A673 (cell line): ENCODE measurements at regions of chr12 and their contacts with region 1.

Region 1: DNA sequence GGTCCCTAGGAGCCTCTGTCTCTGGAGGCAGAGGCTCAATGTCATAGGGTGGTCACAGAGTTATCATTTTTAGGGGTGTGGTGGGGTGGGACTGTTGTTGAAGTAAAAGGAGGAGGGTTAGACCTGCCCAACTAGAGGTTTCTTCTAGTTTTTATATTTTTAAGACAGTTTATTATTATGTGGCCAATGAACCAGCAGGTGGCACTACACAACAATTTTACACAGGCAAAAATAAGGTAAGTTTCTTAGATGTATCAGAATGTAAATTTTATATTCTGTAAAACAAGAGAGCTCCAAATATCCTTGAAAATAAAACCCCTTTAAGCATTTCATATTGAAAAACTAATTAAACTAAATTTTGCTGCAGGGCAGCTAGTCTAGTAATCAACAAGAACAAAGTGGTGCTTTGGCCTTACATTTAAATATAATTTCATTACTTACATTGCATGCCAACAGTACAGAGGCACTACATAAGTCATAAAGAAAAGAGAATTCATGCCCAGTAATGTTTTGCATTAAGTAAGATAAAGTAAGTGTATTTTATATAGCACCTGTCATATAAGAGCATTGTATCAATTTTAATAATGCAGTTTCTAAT is 22.2 kb upstream of the OVCH1 start:
- DNase-seq: peak; percentile 66
- H3K4me3 ChIP-seq: no peak overlapping the region
- H3K27ac ChIP-seq: no peak overlapping the region
- H3K4me1 ChIP-seq: no peaks in the 10 kb centered on the region
- H3K27me3 ChIP-seq: no peaks in the 10 kb centered on the region
- CTCF ChIP-seq: peak; percentile 71

Region 2: DNA sequence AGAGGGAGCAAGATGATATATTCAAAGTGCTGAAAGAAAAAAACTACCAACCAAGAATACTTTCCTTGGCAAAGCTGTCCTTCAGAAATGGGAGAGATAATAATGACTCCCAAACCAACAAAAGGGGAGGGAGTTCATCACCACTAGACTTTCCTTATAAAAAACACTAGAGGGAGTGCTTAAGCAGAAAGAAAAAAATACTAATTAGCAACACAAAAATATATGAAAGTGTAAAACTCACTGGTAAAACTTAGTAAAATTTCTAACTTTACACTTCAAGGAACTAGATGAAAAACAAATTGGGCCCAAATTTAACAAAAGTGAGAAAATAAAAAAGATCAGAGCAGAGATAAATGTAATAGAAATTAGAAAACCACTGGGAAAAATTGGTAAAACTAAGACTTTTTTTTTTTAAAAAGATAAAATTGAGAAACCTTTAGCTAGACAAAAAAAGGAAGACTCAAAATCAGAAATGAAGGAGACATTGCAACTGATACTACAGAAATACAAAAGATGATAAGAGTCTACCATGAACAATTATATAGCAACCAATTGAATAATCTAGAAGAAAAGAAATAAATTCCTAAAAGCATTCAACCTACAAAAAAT is 431.0 kb before region 1 on chr12:
- CTCF ChIA-PET with region 1: no interaction called
- POLR2A ChIA-PET with region 1: no interaction called
- intact Hi-C with region 1: loop called (anchors 10 kb)
- DNase-seq: peak; percentile 57
- H3K4me3 ChIP-seq: no peak overlapping the region
- H3K27ac ChIP-seq: no peak overlapping the region
- H3K4me1 ChIP-seq: no peaks in the 10 kb centered on the region
- H3K27me3 ChIP-seq: no peaks in the 10 kb centered on the region
- CTCF ChIP-seq: peak; percentile 71

Region 3: DNA sequence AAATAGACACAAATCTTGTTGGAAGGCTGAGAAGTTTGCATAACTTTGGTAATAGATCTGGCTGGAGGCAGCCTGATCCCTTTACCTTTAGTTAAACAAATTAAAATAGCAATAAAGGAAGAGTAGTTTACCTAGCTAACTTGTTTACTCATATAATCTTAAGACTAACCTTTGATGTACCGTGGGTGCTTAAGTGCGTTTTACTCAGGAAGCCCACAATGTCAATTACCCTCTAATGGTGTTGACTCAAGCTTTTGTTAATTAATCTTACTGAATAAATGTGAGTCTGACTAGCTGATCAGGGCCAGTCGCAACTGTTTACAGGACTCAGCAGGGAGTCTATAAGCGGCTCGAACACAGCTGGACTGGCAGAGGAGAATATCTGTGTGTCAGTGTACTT is 319.1 kb before region 1 on chr12:
- CTCF ChIA-PET with region 1: no interaction called
- POLR2A ChIA-PET with region 1: no interaction called
- intact Hi-C with region 1: no loop called
- DNase-seq: no peak
- H3K4me3 ChIP-seq: no peak overlapping the region
- H3K27ac ChIP-seq: no peak overlapping the region
- H3K4me1 ChIP-seq: no peaks in the 10 kb centered on the region
- H3K27me3 ChIP-seq: no peaks in the 10 kb centered on the region
- CTCF ChIP-seq: no peak

Region 4: GRCh38 chr12:29317556-29318363 is 201.9 kb before region 1 on chr12:
- CTCF ChIA-PET with region 1: no interaction called
- POLR2A ChIA-PET with region 1: no interaction called
- intact Hi-C with region 1: loop called (anchors 10 kb)
- DNase-seq: peak; percentile 84
- H3K4me3 ChIP-seq: no peak overlapping the region
- H3K27ac ChIP-seq: no peak overlapping the region
- H3K4me1 ChIP-seq: peaks cover 6% of the 10 kb centered on the region
- H3K27me3 ChIP-seq: no peaks in the 10 kb centered on the region
- CTCF ChIP-seq: peak; percentile 97

Region 5: DNA sequence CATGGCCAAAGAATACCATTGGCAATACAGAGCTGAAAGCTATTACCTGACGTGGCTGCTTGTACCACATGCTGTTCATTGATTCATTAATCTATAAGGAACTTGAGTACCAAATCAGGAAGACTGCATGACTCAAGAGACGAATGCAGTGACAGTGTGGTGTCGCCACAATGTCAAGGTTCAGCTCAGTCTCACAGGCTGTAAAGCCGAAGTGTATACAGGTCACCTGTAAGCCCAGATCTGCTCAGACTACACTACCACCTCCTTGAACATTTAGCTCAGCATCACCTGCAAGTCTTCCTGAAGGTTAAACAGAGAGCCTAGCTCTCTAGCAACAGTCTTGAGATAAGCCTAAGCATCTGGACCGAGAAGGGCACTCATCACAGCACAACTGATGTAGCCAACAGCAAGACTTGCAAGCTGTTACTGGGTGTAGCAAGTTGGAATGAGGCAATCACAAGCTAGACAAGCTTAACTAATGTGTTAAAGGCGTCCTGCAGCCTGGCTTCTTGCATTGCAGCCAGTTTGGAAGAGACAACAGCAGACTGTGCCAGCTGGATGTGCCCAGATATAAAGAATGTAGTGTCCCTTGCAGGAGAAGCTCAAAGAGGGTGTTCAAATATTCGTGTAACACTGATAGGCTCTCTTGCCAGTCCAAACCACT is 243.1 kb after region 1 on chr12:
- CTCF ChIA-PET with region 1: no interaction called
- POLR2A ChIA-PET with region 1: no interaction called
- intact Hi-C with region 1: no loop called
- DNase-seq: no peak
- H3K4me3 ChIP-seq: no peak overlapping the region
- H3K27ac ChIP-seq: no peak overlapping the region
- H3K4me1 ChIP-seq: no peaks in the 10 kb centered on the region
- H3K27me3 ChIP-seq: no peaks in the 10 kb centered on the region
- CTCF ChIP-seq: no peak

Region 6: GRCh38 chr12:30286345-30286926 is 766.8 kb after region 1 on chr12:
- CTCF ChIA-PET with region 1: no interaction called
- POLR2A ChIA-PET with region 1: no interaction called
- intact Hi-C with region 1: loop called (anchors 5 kb)
- DNase-seq: peak; percentile 59
- H3K4me3 ChIP-seq: no peak overlapping the region
- H3K27ac ChIP-seq: no peak overlapping the region
- H3K4me1 ChIP-seq: no peaks in the 10 kb centered on the region
- H3K27me3 ChIP-seq: peaks cover 8% of the 10 kb centered on the region
- CTCF ChIP-seq: peak; percentile 71

Region 7: DNA sequence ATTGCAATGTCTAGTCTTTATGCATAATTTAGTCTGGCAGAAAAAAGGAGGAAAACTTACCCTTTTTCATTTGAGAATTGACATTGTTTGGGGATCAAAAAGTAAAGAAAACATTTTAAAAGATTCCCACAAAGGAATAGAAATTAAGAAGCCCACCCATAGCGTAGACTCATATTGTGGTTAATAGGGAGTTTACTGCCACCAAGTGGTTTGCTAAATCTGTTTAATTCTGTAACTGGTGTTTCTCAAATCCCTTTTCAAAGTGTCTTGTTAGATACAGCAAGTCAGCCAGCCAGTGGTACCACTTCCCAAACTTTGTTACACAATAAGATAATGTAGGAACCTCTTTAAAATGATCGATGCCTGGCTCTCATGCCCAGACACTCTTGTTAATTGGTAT is 995.7 kb after region 1 on chr12:
- CTCF ChIA-PET with region 1: no interaction called
- POLR2A ChIA-PET with region 1: no interaction called
- intact Hi-C with region 1: loop called (anchors 1 kb)
- DNase-seq: peak; percentile 47
- H3K4me3 ChIP-seq: no peak overlapping the region
- H3K27ac ChIP-seq: no peak overlapping the region
- H3K4me1 ChIP-seq: peaks cover 10% of the 10 kb centered on the region
- H3K27me3 ChIP-seq: no peaks in the 10 kb centered on the region
- CTCF ChIP-seq: peak; percentile 58